Dorsolateral prefrontal cortex (tissue), 120 donors: ENCODE measurements at regions of chr4 and their contacts with region 1.

Region 1: GRCh38 chr4:185209031-185209851 is at the start of gene SNX25:
- DNase-seq: peak; percentile 74 to 96 (median 87)
- H3K4me3 ChIP-seq: peak within 1 kb of the TSS; percentile 61 to 87 (median 75)
- H3K27ac ChIP-seq: peak within 1 kb of the TSS; percentile 40 to 93 (median 78)
- H3K27me3 ChIP-seq: no peaks in the 10 kb centered on the region
- CTCF ChIP-seq: peak in 29 of 56 donors; percentile 8 to 70 (median 34)
- total RNA-seq, gene SNX25: 14.6 to 37.3 (median 24.4) TPM

Region 2: GRCh38 chr4:184028394-184029374 is 1180.6 kb before region 1 on chr4:
- intact Hi-C with region 1: no loop called
- DNase-seq: no peak
- H3K4me3 ChIP-seq: peak overlapping the region in 4 of 59 donors; percentile 2 to 17 (median 12)
- H3K27ac ChIP-seq: no peak overlapping the region
- H3K27me3 ChIP-seq: no peaks in the 10 kb centered on the region
- CTCF ChIP-seq: no peak

Region 3: DNA sequence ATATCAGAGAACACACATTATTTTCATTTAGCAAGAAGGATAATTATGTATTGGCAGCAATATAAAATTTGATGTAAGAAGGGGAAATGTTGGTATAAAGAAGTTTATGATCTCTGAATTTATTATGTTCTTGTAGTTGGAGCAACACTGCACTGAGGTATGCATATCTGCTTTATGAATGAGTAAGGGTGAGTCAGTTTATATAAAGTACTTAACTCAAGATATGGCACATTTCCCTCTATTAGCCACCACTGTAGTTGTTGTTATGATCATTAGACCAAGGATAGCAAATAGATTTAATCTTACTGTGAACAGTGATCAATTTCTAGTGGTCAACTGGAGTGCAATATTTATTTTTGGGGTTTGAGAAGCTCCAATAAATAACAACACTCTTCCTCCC is 66.8 kb after region 1 on chr4:
- intact Hi-C with region 1: no loop called
- DNase-seq: no peak
- H3K4me3 ChIP-seq: no peak overlapping the region
- H3K27ac ChIP-seq: no peak overlapping the region
- H3K27me3 ChIP-seq: no peaks in the 10 kb centered on the region
- CTCF ChIP-seq: no peak

Region 4: DNA sequence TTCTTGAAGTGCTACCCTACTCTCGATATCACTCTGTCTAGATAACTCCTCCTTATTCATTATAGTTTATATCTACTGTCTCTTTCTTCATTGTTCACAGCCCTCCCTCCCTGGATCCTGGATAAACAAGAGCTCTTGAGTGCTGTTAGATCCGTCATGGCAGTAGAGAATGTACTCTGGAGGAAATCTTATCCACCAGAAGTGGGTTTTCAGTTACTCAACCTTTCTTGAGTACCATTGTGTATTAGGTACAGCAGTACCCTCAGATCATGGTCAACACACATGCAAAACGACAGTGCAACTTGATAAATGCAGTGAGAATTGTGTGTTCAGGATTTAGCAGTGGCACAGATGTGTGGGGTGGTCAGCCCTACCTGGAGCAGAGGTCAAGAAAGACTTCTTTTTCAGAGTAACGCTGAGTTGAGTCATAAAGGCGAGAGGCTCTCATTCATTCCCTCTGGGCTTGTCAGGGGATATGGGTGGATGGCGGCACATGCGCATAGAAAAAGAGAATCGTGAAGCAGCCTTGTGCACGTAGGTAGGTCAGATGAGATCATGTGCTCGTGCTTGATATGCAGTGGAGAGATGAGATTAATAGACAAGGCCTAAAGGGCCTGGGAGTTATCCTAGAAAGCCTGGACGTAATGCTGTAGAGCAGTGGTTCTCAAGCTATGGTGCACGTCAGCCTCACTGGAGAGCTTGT is 89.6 kb after region 1 on chr4:
- intact Hi-C with region 1: loop called (anchors 5 to 10 kb)
- DNase-seq: no peak
- H3K4me3 ChIP-seq: no peak overlapping the region
- H3K27ac ChIP-seq: no peak overlapping the region
- H3K27me3 ChIP-seq: no peaks in the 10 kb centered on the region
- CTCF ChIP-seq: no peak

Region 5: GRCh38 chr4:185304944-185305690 is 95.9 kb after region 1 on chr4:
- intact Hi-C with region 1: loop called in 1 of 2 experiments (anchors 5 kb)
- DNase-seq: peak in 1 of 10 donors; percentile 29
- H3K4me3 ChIP-seq: peak overlapping the region in 9 of 59 donors; percentile 1 to 47 (median 16)
- H3K27ac ChIP-seq: peak overlapping the region in 52 of 59 donors; percentile 7 to 88 (median 74)
- H3K27me3 ChIP-seq: no peaks in the 10 kb centered on the region
- CTCF ChIP-seq: peak in 53 of 56 donors; percentile 29 to 73 (median 56)

Region 6: DNA sequence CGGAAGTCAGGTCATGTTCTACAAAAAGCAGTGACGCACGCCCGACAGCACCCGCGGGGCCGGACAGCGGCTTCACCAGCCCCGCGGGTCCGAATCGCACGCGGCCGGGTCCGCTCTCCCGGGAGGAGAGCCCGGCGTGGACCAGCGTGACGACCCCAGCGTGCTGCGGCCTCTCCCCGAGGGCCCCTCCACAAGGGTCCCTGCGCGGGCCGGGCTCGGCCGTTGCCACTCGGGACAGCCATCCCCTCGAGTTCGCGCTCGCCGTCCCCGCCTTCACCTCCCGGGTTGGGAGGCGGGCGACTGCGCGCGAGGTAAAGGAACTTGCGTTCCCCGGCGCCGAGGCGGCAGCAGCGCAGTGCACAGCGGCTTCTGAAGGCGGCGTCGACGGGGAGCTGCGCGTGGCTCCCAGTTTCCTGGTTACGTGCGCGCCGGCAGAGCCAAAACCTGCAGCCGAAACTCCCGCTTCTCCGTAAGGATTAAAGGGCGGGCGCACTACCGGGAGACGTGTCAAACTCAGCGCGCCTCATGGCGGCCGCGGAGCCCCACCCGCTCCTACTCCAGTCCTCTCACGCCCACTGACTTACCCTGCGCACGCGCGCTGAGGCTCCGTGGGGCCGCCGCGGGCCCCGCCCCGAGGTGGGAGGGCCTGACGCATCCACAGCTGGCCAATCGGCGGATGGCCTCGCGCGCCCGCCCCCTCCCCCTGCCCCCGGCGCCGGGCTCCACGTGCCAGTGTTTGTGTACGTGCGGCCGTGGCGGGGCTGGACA is 186.9 kb after region 1 on chr4:
- intact Hi-C with region 1: loop called (anchors 2 kb)
- DNase-seq: peak; percentile 96 to 99 (median 98)
- H3K4me3 ChIP-seq: peak overlapping the region; percentile 52 to 100 (median 87)
- H3K27ac ChIP-seq: peak overlapping the region; percentile 92 to 100 (median 100)
- H3K27me3 ChIP-seq: no peaks in the 10 kb centered on the region
- CTCF ChIP-seq: peak in 14 of 56 donors; percentile 5 to 28 (median 14)

Region 7: DNA sequence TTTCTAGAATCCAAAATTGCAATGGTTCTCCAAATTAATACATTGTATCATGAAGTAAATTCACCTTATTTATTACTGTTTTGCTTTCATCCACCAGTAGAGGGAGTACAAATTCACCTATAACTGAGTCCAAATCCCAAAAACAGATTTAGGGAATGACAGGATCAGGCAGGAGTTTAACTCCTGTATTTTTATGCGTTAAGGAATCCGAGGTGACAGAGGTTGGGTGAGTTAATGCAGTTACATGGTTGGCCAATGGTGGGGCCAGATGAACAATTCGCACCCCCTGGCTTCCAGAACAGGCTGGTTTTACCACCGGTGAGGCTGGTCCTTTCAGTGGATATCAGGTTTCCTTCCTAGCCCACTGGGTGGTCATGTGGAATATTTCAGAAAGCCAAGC is 1263.7 kb after region 1 on chr4:
- intact Hi-C with region 1: no loop called
- DNase-seq: no peak
- H3K4me3 ChIP-seq: no peak overlapping the region
- H3K27ac ChIP-seq: no peak overlapping the region
- H3K27me3 ChIP-seq: peaks cover 0 to 10% (median 0%) of the 10 kb centered on the region in 45 donors
- CTCF ChIP-seq: peak; percentile 41 to 78 (median 63)